Sigmoid colon (tissue), 7 donors: ENCODE measurements at regions of chr20 and their contacts with region 1.

Region 1: GRCh38 chr20:32819992-32820710 is 397 bp downstream of the MAPRE1 start:
- DNase-seq: no peak
- H3K4me3 ChIP-seq: peak overlapping the region; percentile 65 to 92 (median 82)
- H3K27ac ChIP-seq: peak overlapping the region; percentile 90 to 99 (median 96)
- H3K4me1 ChIP-seq: peaks cover 0 to 48% (median 38%) of the 10 kb centered on the region in 4 donors
- H3K27me3 ChIP-seq: no peaks in the 10 kb centered on the region
- CTCF ChIP-seq: peak in 1 of 4 experiments; percentile 32
- EP300 ChIP-seq: no peak
- POLR2A ChIP-seq: no peak

Region 2: GRCh38 chr20:32779500-32780211 is 40.5 kb before region 1 on chr20:
- intact Hi-C with region 1: no loop called
- DNase-seq: no peak
- H3K4me3 ChIP-seq: no peak overlapping the region
- H3K27ac ChIP-seq: no peak overlapping the region
- H3K4me1 ChIP-seq: peaks cover 0 to 13% (median 9%) of the 10 kb centered on the region in 4 donors
- H3K27me3 ChIP-seq: no peaks in the 10 kb centered on the region
- CTCF ChIP-seq: no peak
- EP300 ChIP-seq: no peak
- POLR2A ChIP-seq: no peak

Region 3: GRCh38 chr20:32877507-32877906 is 57.4 kb after region 1 on chr20:
- intact Hi-C with region 1: loop called (anchors 5 kb)
- DNase-seq: peak; percentile 79
- H3K4me3 ChIP-seq: no peak overlapping the region
- H3K27ac ChIP-seq: peak overlapping the region in 3 of 4 donors; percentile 63 to 77 (median 72)
- H3K4me1 ChIP-seq: peaks cover 0 to 21% (median 9%) of the 10 kb centered on the region in 4 donors
- H3K27me3 ChIP-seq: no peaks in the 10 kb centered on the region
- CTCF ChIP-seq: no peak
- EP300 ChIP-seq: no peak
- POLR2A ChIP-seq: no peak

Region 4: DNA sequence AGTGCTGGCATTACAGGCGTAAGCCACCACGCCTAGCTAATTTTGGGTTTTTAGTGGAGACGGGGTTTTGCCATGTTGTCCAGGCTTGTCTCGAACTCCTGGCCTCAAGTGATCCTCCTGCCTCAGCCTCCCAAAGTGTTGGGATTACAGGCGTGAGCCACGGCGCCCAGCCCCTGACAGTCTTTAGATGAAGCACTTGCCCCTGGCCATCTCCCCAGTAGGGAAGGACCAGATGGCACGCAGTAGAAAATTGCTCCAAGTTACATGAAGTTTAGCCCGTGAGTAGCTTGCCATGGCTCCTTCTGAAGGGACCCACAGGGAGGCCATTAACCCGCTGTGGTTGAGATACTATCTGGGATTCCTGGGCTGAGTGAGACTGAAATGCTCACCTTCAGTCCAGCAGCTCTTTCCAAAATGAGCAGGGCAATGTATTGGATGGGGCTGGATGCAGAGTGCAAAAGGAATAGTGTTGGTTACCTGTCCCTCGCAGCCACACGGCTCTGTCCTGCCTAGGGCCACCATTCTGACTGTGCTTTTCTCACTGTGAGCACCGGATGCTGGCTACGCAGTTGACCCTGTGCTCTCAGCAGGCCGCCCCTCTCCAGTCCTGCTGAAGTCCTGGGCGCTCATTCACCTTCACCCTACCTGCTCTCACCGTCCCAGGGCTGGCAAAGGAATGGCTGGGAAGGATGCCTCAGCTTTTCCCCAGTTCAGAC is 105.5 kb after region 1 on chr20:
- intact Hi-C with region 1: no loop called
- DNase-seq: no peak
- H3K4me3 ChIP-seq: no peak overlapping the region
- H3K27ac ChIP-seq: no peak overlapping the region
- H3K4me1 ChIP-seq: no peaks in the 10 kb centered on the region
- H3K27me3 ChIP-seq: no peaks in the 10 kb centered on the region
- CTCF ChIP-seq: no peak
- EP300 ChIP-seq: no peak
- POLR2A ChIP-seq: no peak